ENCODE measurements at regions of chr10 and their contacts with region 1.

Region 1: GRCh38 chr10:104045151-104046089 is 40.3 kb downstream of the COL17A1 start:
- DNase-seq: no peak
- H3K4me3 Mint-ChIP-seq: no peak overlapping the region
- H3K27ac Mint-ChIP-seq: no peak overlapping the region
- H3K4me1 Mint-ChIP-seq: no peaks in the 10 kb centered on the region
- H3K27me3 Mint-ChIP-seq: peaks cover 8% of the 10 kb centered on the region

Region 2: GRCh38 chr10:103645141-103646054 is 400.0 kb before region 1 on chr10:
- intact Hi-C with region 1: no loop called
- DNase-seq: no peak
- H3K4me3 Mint-ChIP-seq: no peak overlapping the region
- H3K27ac Mint-ChIP-seq: no peak overlapping the region
- H3K4me1 Mint-ChIP-seq: no peaks in the 10 kb centered on the region
- H3K27me3 Mint-ChIP-seq: peaks cover 2% of the 10 kb centered on the region

Region 3: DNA sequence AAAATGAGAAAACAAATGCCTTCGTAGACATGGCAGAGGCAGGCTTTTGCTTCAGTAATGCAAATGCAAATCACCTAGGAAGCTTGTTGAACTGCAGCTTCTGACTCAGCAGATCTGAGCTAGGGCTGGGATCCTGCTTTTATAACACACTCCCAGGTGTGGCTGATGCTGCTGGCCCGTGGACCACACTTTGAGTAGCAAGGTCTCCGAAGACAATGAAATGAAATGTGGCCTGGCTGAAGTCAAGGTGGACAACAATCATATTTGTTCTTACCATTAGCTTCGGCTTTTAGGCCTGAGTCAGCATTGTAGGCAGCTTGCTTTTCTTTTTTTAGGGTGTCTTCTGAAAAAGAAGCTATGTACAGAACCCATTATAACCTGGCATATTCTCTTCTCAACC is 13.9 kb after region 1 on chr10:
- intact Hi-C with region 1: no loop called
- DNase-seq: no peak
- H3K4me3 Mint-ChIP-seq: no peak overlapping the region
- H3K27ac Mint-ChIP-seq: no peak overlapping the region
- H3K4me1 Mint-ChIP-seq: no peaks in the 10 kb centered on the region
- H3K27me3 Mint-ChIP-seq: no peaks in the 10 kb centered on the region

Region 4: GRCh38 chr10:104209575-104210198 is 164.3 kb after region 1 on chr10:
- intact Hi-C with region 1: loop called (anchors 10 kb)
- DNase-seq: no peak
- H3K4me3 Mint-ChIP-seq: no peak overlapping the region
- H3K27ac Mint-ChIP-seq: no peak overlapping the region
- H3K4me1 Mint-ChIP-seq: no peaks in the 10 kb centered on the region
- H3K27me3 Mint-ChIP-seq: peaks cover 29% of the 10 kb centered on the region

Region 5: DNA sequence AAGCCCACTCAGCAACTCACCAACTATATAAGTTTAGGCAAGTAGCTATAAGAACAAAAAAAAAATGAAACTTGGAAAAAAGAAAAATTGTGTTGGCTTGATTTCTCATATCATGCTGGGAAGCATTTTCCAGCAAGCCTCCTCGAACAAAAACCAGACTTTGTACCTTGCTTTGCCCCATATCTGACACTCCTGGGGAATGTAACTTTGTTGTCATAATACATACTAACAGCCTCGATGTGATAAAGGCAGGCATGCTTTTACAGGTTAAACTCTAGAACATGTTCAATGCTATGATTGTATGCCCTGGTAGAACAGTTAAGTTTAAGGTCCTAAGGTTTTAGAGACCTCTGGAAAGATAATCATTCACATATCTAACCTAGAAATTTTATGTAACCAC is 175.1 kb after region 1 on chr10:
- intact Hi-C with region 1: no loop called
- DNase-seq: no peak
- H3K4me3 Mint-ChIP-seq: no peak overlapping the region
- H3K27ac Mint-ChIP-seq: no peak overlapping the region
- H3K4me1 Mint-ChIP-seq: no peaks in the 10 kb centered on the region
- H3K27me3 Mint-ChIP-seq: peaks cover 22% of the 10 kb centered on the region

Region 6: DNA sequence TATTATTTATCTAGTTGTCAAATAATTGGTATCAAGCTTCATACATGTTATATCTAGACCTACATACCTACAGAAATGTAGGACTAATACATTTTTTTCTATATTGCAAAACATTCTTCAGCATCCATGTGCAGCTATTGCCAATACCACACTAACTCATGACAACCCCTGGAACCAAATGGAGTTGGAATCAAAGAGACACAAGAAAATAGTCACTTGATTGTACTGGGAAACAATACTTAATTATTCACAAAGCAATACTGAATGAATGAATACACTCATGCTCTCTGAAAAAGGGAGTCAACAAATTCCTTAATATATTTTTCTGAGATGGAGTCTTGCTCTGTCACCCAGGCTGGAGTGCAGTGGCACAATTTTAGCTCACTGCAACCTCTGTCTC is 197.1 kb after region 1 on chr10:
- intact Hi-C with region 1: no loop called
- DNase-seq: no peak
- H3K4me3 Mint-ChIP-seq: no peak overlapping the region
- H3K27ac Mint-ChIP-seq: no peak overlapping the region
- H3K4me1 Mint-ChIP-seq: peaks cover 8% of the 10 kb centered on the region
- H3K27me3 Mint-ChIP-seq: peaks cover 32% of the 10 kb centered on the region